Heart right ventricle (tissue), 16 donors: ENCODE measurements at regions of chr4 and their contacts with region 1.

Region 1: GRCh38 chr4:101782554-101782953 is 8.0 kb upstream of the BANK1 start:
- DNase-seq: no peak
- ATAC-seq: no peak
- H3K4me3 ChIP-seq: no peak overlapping the region
- H3K27ac ChIP-seq: no peak overlapping the region
- H3K4me1 ChIP-seq: no peaks in the 10 kb centered on the region
- H3K27me3 ChIP-seq: no peaks in the 10 kb centered on the region
- CTCF ChIP-seq: no peak

Region 2: GRCh38 chr4:101825953-101826352 is 43.4 kb after region 1 on chr4:
- intact Hi-C with region 1: loop called in 1 of 10 experiments (anchors 5 kb)
- DNase-seq: no peak
- ATAC-seq: no peak
- H3K4me3 ChIP-seq: no peak overlapping the region
- H3K27ac ChIP-seq: no peak overlapping the region
- H3K4me1 ChIP-seq: no peaks in the 10 kb centered on the region
- H3K27me3 ChIP-seq: no peaks in the 10 kb centered on the region
- CTCF ChIP-seq: no peak

Region 3: GRCh38 chr4:102114123-102114630 is 331.6 kb after region 1 on chr4:
- intact Hi-C with region 1: no loop called
- DNase-seq: no peak
- ATAC-seq: no peak
- H3K4me3 ChIP-seq: no peak overlapping the region
- H3K27ac ChIP-seq: no peak overlapping the region
- H3K4me1 ChIP-seq: no peaks in the 10 kb centered on the region
- H3K27me3 ChIP-seq: no peaks in the 10 kb centered on the region
- CTCF ChIP-seq: no peak